Activated CD4-positive, alpha-beta memory T cell treated with anti-CD3 and anti-CD28 coated beads for 36 hours (primary cell): ENCODE measurements at regions of chr12 and their contacts with region 1.

Region 1: DNA sequence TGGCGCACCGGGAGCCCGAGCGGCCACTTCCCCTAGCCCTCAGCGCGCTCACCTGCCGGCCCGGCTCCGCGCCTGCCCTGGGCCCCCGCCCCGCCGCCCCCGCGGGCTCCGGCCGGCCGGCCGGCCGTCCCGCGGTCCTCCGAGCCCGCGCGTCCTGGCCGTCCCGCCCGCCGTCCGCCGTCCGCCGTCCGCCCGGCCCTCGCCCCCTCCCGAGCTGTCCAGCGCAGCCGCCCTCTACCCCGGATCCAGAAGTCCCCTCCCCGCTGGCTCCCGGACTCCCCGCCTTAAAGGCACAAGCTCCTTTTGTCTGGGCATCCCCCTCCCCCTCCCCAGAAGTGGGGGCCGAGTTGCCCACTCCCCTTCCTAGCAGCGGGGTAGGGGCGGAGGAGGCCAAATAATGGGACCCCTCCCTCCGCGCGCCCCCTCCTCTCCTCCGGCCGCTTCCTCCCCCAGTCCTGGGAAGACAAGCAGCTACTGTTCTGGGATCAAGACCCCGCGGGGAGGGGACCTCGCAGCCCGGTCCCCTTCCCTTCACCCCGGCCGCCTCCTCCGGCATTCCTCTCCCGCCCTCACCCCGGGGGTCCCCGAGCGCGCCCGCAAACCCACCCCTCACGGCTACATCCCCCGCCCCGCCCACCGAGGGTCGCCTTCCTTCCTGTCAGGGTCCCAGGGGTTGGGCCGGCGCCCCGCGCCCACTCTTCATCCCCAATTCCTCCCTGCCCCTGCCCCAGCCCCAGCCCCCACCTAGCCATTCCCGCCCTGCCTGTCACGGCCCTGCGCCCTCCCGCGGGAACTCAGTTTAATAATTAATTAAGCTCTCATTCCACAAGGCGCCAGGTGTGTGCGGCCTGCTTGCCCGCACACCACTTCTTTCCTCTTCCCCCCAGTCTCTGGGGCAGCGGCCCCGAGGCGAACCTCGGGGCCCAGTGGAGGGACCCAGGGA is at the start of gene ADCY6:
- DNase-seq: peak; percentile 24
- H3K4me3 Mint-ChIP-seq: peak within 1 kb of the TSS; percentile 67
- H3K27ac Mint-ChIP-seq: no peak within 1 kb of the TSS
- H3K4me1 Mint-ChIP-seq: no peaks in the 10 kb centered on the region
- H3K27me3 Mint-ChIP-seq: peaks cover 41% of the 10 kb centered on the region
- total RNA-seq, gene ADCY6: 0.15 to 0.21 TPM

Region 2: DNA sequence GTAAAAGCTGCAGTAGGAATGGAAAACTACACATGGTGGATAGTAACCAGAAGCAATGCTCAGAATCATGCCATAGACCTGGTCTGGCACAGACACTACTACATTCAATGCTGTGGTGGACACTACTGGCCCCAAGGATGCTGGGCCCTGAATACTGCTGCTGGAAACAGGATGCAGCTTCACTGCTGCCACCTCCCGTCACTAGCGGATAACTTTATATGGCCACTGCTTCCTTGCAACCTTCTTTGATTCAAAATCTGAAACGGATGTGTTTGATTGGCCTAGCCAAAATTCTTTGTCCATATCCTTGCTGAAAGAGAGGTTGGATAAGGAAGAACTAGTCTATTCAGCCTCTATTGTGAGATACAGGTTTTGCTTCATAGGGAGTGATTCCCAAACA is 30.9 kb before region 1 on chr12:
- CTCF ChIA-PET with region 1: interaction called, 247 read pairs
- POLR2A ChIA-PET with region 1: interaction called, 3 read pairs
- intact Hi-C with region 1: no loop called
- DNase-seq: no peak
- H3K4me3 Mint-ChIP-seq: no peak overlapping the region
- H3K27ac Mint-ChIP-seq: no peak overlapping the region
- H3K4me1 Mint-ChIP-seq: no peaks in the 10 kb centered on the region
- H3K27me3 Mint-ChIP-seq: no peaks in the 10 kb centered on the region

Region 3: DNA sequence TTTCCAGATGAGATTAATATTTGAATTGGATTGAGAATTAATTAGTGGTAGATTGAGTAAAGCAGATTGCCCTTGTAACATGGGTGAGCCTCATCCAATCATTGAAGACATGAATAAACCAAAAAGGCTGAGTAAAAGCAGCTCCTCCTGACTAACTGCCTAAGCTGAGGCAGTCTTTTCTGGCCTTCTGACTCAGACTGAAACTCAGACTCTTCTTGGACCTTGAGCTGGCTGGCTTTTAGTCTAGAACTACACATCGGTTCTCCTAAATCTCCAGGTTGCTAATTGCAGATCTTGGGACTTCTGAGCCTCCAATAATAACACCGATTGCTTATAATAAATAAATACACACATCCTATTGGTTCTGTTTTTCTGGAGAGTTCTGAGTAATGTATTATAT is 112.2 kb after region 1 on chr12:
- CTCF ChIA-PET with region 1: no interaction called
- POLR2A ChIA-PET with region 1: no interaction called
- intact Hi-C with region 1: no loop called
- DNase-seq: peak; percentile 24
- H3K4me3 Mint-ChIP-seq: no peak overlapping the region
- H3K27ac Mint-ChIP-seq: no peak overlapping the region
- H3K4me1 Mint-ChIP-seq: peaks cover 2% of the 10 kb centered on the region
- H3K27me3 Mint-ChIP-seq: no peaks in the 10 kb centered on the region